AG04450 (cell line): ENCODE measurements at regions of chr21 and their contacts with region 1.

Region 1: DNA sequence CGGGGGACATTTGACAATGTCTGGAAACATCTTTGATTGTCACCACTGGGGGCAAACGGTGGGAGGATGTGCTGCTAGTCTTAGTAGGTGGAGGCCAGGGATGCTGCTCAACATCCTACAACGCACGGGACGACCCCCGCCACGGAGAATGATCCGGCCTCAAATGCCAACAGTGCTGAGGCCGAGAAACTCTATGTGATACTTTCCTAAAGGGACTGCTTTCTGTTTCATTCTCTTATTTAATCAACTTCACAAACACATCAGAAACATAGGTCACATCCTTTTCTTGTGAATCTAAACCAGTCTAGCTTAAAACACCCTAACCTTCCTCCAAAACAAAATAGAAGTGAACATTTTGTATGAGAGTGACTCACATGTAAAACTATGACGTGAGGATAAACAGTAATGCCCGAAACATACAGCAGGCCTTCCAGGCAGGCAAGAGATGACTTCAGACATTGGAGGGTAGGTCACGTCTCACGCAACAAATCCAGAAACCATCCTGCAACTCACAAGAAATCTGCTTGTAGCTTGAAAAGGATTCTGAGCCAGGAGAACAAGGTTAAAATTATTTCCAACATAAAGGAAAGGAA is 37.2 kb upstream of the ETS2 start:
- DNase-seq: peak; percentile 96
- H3K4me3 ChIP-seq: peak overlapping the region; percentile 14; the same call in 1 of the 2 replicates
- H3K27ac ChIP-seq: peak overlapping the region; percentile 99
- H3K27me3 ChIP-seq: no peaks in the 10 kb centered on the region
- CTCF ChIP-seq: no peak; the same call in 1 of the 2 replicates

Region 2: GRCh38 chr21:38733973-38734546 is 34.5 kb before region 1 on chr21:
- CTCF ChIA-PET with region 1: interaction called, 13 read pairs
- POLR2A ChIA-PET with region 1: no interaction called
- DNase-seq: peak; percentile 49
- H3K4me3 ChIP-seq: peak overlapping the region; percentile 57
- H3K27ac ChIP-seq: peak overlapping the region; percentile 63
- H3K27me3 ChIP-seq: no peaks in the 10 kb centered on the region
- CTCF ChIP-seq: peak; percentile 96

Region 3: GRCh38 chr21:38755681-38756371 is 12.7 kb before region 1 on chr21:
- CTCF ChIA-PET with region 1: interaction called, 5 read pairs
- POLR2A ChIA-PET with region 1: interaction called, 10 read pairs
- DNase-seq: peak; percentile 78
- H3K4me3 ChIP-seq: no peak overlapping the region
- H3K27ac ChIP-seq: peak overlapping the region; percentile 79
- H3K27me3 ChIP-seq: no peaks in the 10 kb centered on the region
- CTCF ChIP-seq: no peak

Region 4: GRCh38 chr21:38787461-38788274 is 19.1 kb after region 1 on chr21:
- CTCF ChIA-PET with region 1: no interaction called
- POLR2A ChIA-PET with region 1: no interaction called
- DNase-seq: no peak
- H3K4me3 ChIP-seq: no peak overlapping the region
- H3K27ac ChIP-seq: no peak overlapping the region
- H3K27me3 ChIP-seq: no peaks in the 10 kb centered on the region
- CTCF ChIP-seq: no peak

Region 5: DNA sequence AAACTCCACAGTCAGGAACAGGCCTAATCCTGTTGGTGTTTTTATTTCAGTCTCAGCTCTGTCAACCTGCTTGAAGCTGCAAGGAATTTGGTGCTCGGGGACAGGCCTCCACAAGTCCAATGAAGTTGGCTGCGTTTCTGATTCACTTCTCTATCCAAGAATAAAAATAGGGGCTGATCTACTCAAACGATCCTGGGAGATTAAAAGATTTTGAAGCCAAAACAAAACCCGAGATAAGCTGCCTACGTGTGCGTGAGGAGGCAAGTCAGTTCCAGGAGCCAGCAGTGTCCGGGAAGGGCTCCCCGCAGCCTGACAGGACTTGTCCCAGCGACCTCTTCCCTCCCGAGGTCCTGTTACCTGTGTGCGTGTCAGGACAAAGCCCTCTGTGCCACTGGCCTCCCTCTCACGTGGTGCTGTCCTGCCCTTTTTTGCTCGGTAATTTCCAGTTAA is 135.1 kb after region 1 on chr21:
- CTCF ChIA-PET with region 1: no interaction called
- POLR2A ChIA-PET with region 1: no interaction called
- DNase-seq: no peak
- H3K4me3 ChIP-seq: no peak overlapping the region
- H3K27ac ChIP-seq: no peak overlapping the region
- H3K27me3 ChIP-seq: no peaks in the 10 kb centered on the region
- CTCF ChIP-seq: no peak